CD4-positive, alpha-beta memory T cell (primary cell): ENCODE measurements at regions of chr10 and their contacts with region 1.

Region 1: GRCh38 chr10:5684318-5684970 is at the start of gene TASOR2:
- DNase-seq: peak; percentile 92 to 93 (median 93)
- H3K4me3 ChIP-seq: peak within 1 kb of the TSS; percentile 76 to 83
- H3K4me3 Mint-ChIP-seq: peak within 1 kb of the TSS; percentile 95 to 99 (median 98)
- H3K27ac ChIP-seq: peak within 1 kb of the TSS; percentile 97
- H3K27ac Mint-ChIP-seq: peak within 1 kb of the TSS; percentile 94 to 99 (median 99)
- H3K4me1 ChIP-seq: peaks cover 48% of the 10 kb centered on the region
- H3K4me1 Mint-ChIP-seq: peaks cover 25 to 58% (median 37%) of the 10 kb centered on the region in 4 donors
- H3K27me3 ChIP-seq: no peaks in the 10 kb centered on the region
- H3K27me3 Mint-ChIP-seq: no peaks in the 10 kb centered on the region
- total RNA-seq, gene TASOR2: 69.1 to 85.7 TPM

Region 2: DNA sequence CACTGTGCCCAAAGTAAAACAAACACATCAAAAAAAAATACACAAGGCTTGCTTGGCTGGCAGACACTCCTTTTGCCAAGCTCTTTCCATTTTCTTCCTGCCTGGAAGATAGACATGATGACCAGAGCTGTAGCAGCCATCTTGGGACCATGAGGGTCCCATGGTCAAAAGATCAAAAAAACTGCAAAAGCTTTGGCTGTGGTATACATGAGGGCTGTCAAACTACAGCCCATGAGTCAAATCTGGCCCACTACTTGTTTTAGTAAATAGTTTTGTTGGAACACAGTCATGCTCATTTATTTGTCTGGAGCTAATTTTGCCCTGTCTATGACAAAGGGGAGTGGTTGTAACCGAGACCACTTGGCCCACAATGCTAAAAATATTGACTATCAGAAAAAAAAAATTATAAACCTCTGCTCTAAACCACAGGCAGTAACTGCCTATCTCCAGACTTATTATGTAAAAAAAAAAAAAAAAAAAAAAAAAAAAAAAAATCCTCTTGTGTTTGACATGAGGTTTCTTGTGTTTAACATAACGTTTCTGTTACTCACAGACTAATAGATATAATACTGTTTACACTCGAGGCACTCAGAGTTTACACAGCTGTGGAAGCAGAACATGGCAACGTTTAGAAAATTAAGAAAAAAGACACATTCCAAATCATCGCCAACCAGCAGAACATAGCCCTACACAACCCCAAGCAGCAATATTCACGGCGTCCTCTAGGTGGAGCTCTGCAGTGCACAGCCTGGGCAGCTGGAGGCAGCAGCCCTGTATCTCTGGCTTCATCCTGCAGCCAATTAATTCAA is 54.9 kb before region 1 on chr10:
- CTCF ChIA-PET with region 1: interaction called, 4 read pairs
- POLR2A ChIA-PET with region 1: no interaction called
- intact Hi-C with region 1: loop called (anchors 1 kb)
- DNase-seq: peak; percentile 76 to 83 (median 79)
- H3K4me3 ChIP-seq: no peak overlapping the region
- H3K4me3 Mint-ChIP-seq: peak overlapping the region in 6 of 8 donors; percentile 34 to 73 (median 52)
- H3K27ac ChIP-seq: no peak overlapping the region
- H3K27ac Mint-ChIP-seq: peak overlapping the region in 2 of 7 donors; percentile 32 to 76
- H3K4me1 ChIP-seq: peaks cover 11% of the 10 kb centered on the region
- H3K4me1 Mint-ChIP-seq: peaks cover 9 to 17% (median 12%) of the 10 kb centered on the region in 4 donors
- H3K27me3 ChIP-seq: no peaks in the 10 kb centered on the region
- H3K27me3 Mint-ChIP-seq: peaks cover 3 to 4% of the 10 kb centered on the region in 2 donors

Region 3: GRCh38 chr10:5643346-5644067 is 40.9 kb before region 1 on chr10:
- CTCF ChIA-PET with region 1: no interaction called
- POLR2A ChIA-PET with region 1: no interaction called
- intact Hi-C with region 1: no loop called
- DNase-seq: no peak
- H3K4me3 ChIP-seq: no peak overlapping the region
- H3K4me3 Mint-ChIP-seq: no peak overlapping the region
- H3K27ac ChIP-seq: no peak overlapping the region
- H3K27ac Mint-ChIP-seq: no peak overlapping the region
- H3K4me1 ChIP-seq: no peaks in the 10 kb centered on the region
- H3K4me1 Mint-ChIP-seq: no peaks in the 10 kb centered on the region
- H3K27me3 ChIP-seq: no peaks in the 10 kb centered on the region
- H3K27me3 Mint-ChIP-seq: no peaks in the 10 kb centered on the region

Region 4: GRCh38 chr10:5710859-5711258 is 26.4 kb after region 1 on chr10:
- CTCF ChIA-PET with region 1: interaction called, 4 read pairs
- POLR2A ChIA-PET with region 1: interaction called, 6 read pairs
- intact Hi-C with region 1: loop called (anchors 2 kb)
- DNase-seq: no peak
- H3K4me3 ChIP-seq: peak overlapping the region; percentile 20 to 29
- H3K4me3 Mint-ChIP-seq: peak overlapping the region; percentile 45 to 84 (median 78)
- H3K27ac ChIP-seq: no peak overlapping the region
- H3K27ac Mint-ChIP-seq: peak overlapping the region in 6 of 7 donors; percentile 3 to 85 (median 17)
- H3K4me1 ChIP-seq: peaks cover 44% of the 10 kb centered on the region
- H3K4me1 Mint-ChIP-seq: peaks cover 38 to 82% (median 62%) of the 10 kb centered on the region in 4 donors
- H3K27me3 ChIP-seq: no peaks in the 10 kb centered on the region
- H3K27me3 Mint-ChIP-seq: no peaks in the 10 kb centered on the region

Region 5: GRCh38 chr10:5873515-5873995 is 189.1 kb after region 1 on chr10:
- CTCF ChIA-PET with region 1: interaction called, 3 read pairs
- POLR2A ChIA-PET with region 1: interaction called, 3 read pairs
- intact Hi-C with region 1: loop called (anchors 1 kb)
- DNase-seq: peak; percentile 57 to 75 (median 63)
- H3K4me3 ChIP-seq: no peak overlapping the region
- H3K4me3 Mint-ChIP-seq: peak overlapping the region in 2 of 8 donors; percentile 26 to 60
- H3K27ac ChIP-seq: no peak overlapping the region
- H3K27ac Mint-ChIP-seq: peak overlapping the region in 3 of 7 donors; percentile 18 to 63 (median 33)
- H3K4me1 ChIP-seq: no peaks in the 10 kb centered on the region
- H3K4me1 Mint-ChIP-seq: peaks cover 3 to 6% (median 4%) of the 10 kb centered on the region in 4 donors
- H3K27me3 ChIP-seq: no peaks in the 10 kb centered on the region
- H3K27me3 Mint-ChIP-seq: no peaks in the 10 kb centered on the region

Region 6: GRCh38 chr10:5977471-5978229 is 293.2 kb after region 1 on chr10 and contains the start of gene IL15RA:
- CTCF ChIA-PET with region 1: no interaction called
- POLR2A ChIA-PET with region 1: no interaction called
- intact Hi-C with region 1: loop called (anchors 10 kb)
- DNase-seq: peak; percentile 76 to 92 (median 81)
- H3K4me3 ChIP-seq: peak within 1 kb of the TSS; percentile 79 to 96
- H3K4me3 Mint-ChIP-seq: peak within 1 kb of the TSS; percentile 95 to 99 (median 98)
- H3K27ac ChIP-seq: peak within 1 kb of the TSS; percentile 84
- H3K27ac Mint-ChIP-seq: peak within 1 kb of the TSS; percentile 93 to 98 (median 96)
- H3K4me1 ChIP-seq: peaks cover 23% of the 10 kb centered on the region
- H3K4me1 Mint-ChIP-seq: peaks cover 17 to 42% (median 29%) of the 10 kb centered on the region in 4 donors
- H3K27me3 ChIP-seq: no peaks in the 10 kb centered on the region
- H3K27me3 Mint-ChIP-seq: no peaks in the 10 kb centered on the region
- total RNA-seq, gene IL15RA: 11.1 to 14.7 TPM